CD4-positive, alpha-beta memory T cell (primary cell): ENCODE measurements at regions of chr16 and their contacts with region 1.

Region 1: GRCh38 chr16:12067714-12068401 is 91.3 kb downstream of the SNX29 start:
- DNase-seq: peak; percentile 62 to 67 (median 66)
- H3K4me3 ChIP-seq: no peak overlapping the region
- H3K4me3 Mint-ChIP-seq: no peak overlapping the region
- H3K27ac ChIP-seq: no peak overlapping the region
- H3K27ac Mint-ChIP-seq: peak overlapping the region in 3 of 7 donors; percentile 14 to 70 (median 29)
- H3K4me1 ChIP-seq: no peaks in the 10 kb centered on the region
- H3K4me1 Mint-ChIP-seq: peaks cover 4 to 6% (median 5%) of the 10 kb centered on the region in 4 donors
- H3K27me3 ChIP-seq: no peaks in the 10 kb centered on the region
- H3K27me3 Mint-ChIP-seq: no peaks in the 10 kb centered on the region

Region 2: GRCh38 chr16:11407047-11407982 is 660.5 kb before region 1 on chr16:
- CTCF ChIA-PET with region 1: interaction called, 32 read pairs
- POLR2A ChIA-PET with region 1: no interaction called
- intact Hi-C with region 1: no loop called
- DNase-seq: peak; percentile 61 to 75 (median 67)
- H3K4me3 ChIP-seq: no peak overlapping the region
- H3K4me3 Mint-ChIP-seq: peak overlapping the region in 1 of 8 donors; percentile 48
- H3K27ac ChIP-seq: no peak overlapping the region
- H3K27ac Mint-ChIP-seq: peak overlapping the region in 2 of 7 donors; percentile 80 to 84
- H3K4me1 ChIP-seq: no peaks in the 10 kb centered on the region
- H3K4me1 Mint-ChIP-seq: peaks cover 0 to 6% (median 4%) of the 10 kb centered on the region in 4 donors
- H3K27me3 ChIP-seq: no peaks in the 10 kb centered on the region
- H3K27me3 Mint-ChIP-seq: no peaks in the 10 kb centered on the region

Region 3: DNA sequence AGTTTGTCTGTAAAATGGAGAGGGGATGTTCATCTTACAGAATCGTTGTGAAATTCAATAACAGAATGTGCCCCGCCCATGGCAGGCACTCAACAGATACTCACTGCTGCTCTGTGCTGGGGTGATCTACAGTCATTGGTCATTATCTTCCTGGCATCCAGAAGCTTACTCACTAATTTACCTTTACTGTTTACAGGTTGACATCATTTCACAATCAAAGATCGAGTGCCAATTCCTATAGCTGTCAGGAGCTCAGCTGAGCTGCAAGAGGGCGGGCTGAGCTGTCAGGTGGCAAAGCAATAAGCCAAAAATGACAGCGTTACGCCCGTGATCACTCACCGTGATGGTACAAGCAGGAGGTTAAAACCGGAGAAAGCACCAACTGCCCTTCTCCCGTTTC is 532.4 kb before region 1 on chr16:
- CTCF ChIA-PET with region 1: interaction called, 12 read pairs
- POLR2A ChIA-PET with region 1: no interaction called
- intact Hi-C with region 1: loop called (anchors 10 kb)
- DNase-seq: no peak
- H3K4me3 ChIP-seq: no peak overlapping the region
- H3K4me3 Mint-ChIP-seq: no peak overlapping the region
- H3K27ac ChIP-seq: no peak overlapping the region
- H3K27ac Mint-ChIP-seq: no peak overlapping the region
- H3K4me1 ChIP-seq: no peaks in the 10 kb centered on the region
- H3K4me1 Mint-ChIP-seq: peaks cover 5 to 11% (median 10%) of the 10 kb centered on the region in 4 donors
- H3K27me3 ChIP-seq: no peaks in the 10 kb centered on the region
- H3K27me3 Mint-ChIP-seq: no peaks in the 10 kb centered on the region

Region 4: DNA sequence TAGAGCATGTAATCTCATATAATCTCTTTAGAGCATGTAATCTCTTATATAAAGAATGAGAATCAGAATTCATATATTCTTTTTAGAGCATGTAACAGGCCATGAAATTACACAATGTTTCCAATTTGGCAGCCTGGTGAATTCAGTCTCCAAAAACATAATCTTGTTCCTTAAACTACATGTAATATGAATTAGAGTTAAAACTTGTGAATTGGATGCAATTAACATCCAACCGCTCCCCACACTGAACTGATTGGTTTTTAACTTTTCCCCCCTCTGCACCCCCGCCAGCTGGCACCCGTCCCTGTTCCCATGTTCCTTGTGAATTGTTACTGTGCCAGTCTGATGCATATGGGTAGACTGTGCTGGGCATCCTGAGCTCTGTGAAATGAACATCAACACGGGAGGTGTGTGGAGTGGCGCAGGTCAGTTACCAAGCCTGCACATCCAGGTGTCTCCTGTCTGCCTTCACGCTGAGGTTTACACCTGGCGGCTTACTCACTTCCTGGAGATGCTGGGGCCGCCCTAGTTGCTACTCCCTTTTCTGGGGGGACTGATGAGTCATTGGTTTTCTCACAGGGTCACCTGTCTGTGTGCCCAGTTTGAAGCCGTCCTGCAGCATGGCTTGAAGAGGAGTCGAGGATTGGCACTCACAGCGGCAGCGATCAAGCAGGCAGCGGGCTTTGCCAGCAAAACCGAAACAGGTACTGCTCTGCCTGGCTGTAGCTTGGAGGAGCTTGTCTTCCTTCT is 40.9 kb before region 1 on chr16:
- CTCF ChIA-PET with region 1: no interaction called
- POLR2A ChIA-PET with region 1: no interaction called
- intact Hi-C with region 1: no loop called
- DNase-seq: no peak
- H3K4me3 ChIP-seq: no peak overlapping the region
- H3K4me3 Mint-ChIP-seq: no peak overlapping the region
- H3K27ac ChIP-seq: no peak overlapping the region
- H3K27ac Mint-ChIP-seq: peak overlapping the region in 3 of 7 donors; percentile 19 to 66 (median 37)
- H3K4me1 ChIP-seq: no peaks in the 10 kb centered on the region
- H3K4me1 Mint-ChIP-seq: peaks cover 0 to 6% (median 3%) of the 10 kb centered on the region in 4 donors
- H3K27me3 ChIP-seq: no peaks in the 10 kb centered on the region
- H3K27me3 Mint-ChIP-seq: no peaks in the 10 kb centered on the region

Region 5: GRCh38 chr16:12057266-12057665 is 10.6 kb before region 1 on chr16:
- CTCF ChIA-PET with region 1: interaction called, 10 read pairs
- POLR2A ChIA-PET with region 1: no interaction called
- intact Hi-C with region 1: no loop called
- DNase-seq: no peak
- H3K4me3 ChIP-seq: no peak overlapping the region
- H3K4me3 Mint-ChIP-seq: no peak overlapping the region
- H3K27ac ChIP-seq: no peak overlapping the region
- H3K27ac Mint-ChIP-seq: no peak overlapping the region
- H3K4me1 ChIP-seq: no peaks in the 10 kb centered on the region
- H3K4me1 Mint-ChIP-seq: peaks cover 3 to 9% (median 6%) of the 10 kb centered on the region in 4 donors
- H3K27me3 ChIP-seq: no peaks in the 10 kb centered on the region
- H3K27me3 Mint-ChIP-seq: no peaks in the 10 kb centered on the region

Region 6: DNA sequence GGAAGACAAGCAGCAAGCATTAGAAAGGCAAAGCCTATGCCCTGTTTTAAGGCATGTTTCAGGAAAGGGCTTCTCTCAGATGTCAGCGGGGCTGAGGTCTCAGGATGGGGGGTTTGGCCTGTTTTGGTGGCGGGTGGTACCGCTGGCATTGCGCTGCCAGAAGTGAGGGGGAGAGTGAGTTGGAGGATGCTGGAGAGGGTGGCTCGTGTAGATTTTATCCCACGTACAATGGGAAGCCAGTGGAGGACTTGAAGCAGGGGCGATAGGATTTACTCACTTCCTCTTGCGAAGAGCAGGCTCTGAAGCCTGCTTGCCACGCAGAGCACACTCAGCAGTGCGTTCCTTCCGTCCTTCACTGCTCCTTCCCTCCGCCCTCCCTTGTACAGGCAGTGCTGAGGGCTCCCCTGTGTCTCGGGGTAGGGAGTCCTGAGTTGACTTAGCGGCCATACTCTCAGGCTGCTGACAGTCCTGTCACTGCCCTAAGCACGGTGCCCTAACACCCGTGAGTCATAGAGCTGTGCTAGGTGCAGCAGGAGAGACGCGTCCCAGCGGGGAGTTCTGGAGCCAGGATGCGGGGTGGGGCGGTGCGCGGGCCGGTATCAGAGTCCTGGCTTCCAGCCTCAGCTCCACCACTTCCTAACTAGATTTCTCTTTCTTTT is 21.8 kb after region 1 on chr16:
- CTCF ChIA-PET with region 1: interaction called, 54 read pairs
- POLR2A ChIA-PET with region 1: interaction called, 8 read pairs
- intact Hi-C with region 1: no loop called
- DNase-seq: peak in 3 of 5 donors; percentile 25 to 38 (median 38)
- H3K4me3 ChIP-seq: peak overlapping the region; percentile 29 to 32
- H3K4me3 Mint-ChIP-seq: peak overlapping the region; percentile 74 to 89 (median 80)
- H3K27ac ChIP-seq: peak overlapping the region; percentile 0
- H3K27ac Mint-ChIP-seq: peak overlapping the region; percentile 60 to 98 (median 92)
- H3K4me1 ChIP-seq: peaks cover 24% of the 10 kb centered on the region
- H3K4me1 Mint-ChIP-seq: peaks cover 20 to 34% (median 26%) of the 10 kb centered on the region in 4 donors
- H3K27me3 ChIP-seq: no peaks in the 10 kb centered on the region
- H3K27me3 Mint-ChIP-seq: no peaks in the 10 kb centered on the region

Region 7: GRCh38 chr16:12120217-12120981 is 52.5 kb after region 1 on chr16:
- CTCF ChIA-PET with region 1: no interaction called
- POLR2A ChIA-PET with region 1: no interaction called
- intact Hi-C with region 1: no loop called
- DNase-seq: no peak
- H3K4me3 ChIP-seq: no peak overlapping the region
- H3K4me3 Mint-ChIP-seq: no peak overlapping the region
- H3K27ac ChIP-seq: no peak overlapping the region
- H3K27ac Mint-ChIP-seq: peak overlapping the region in 1 of 7 donors; percentile 44
- H3K4me1 ChIP-seq: no peaks in the 10 kb centered on the region
- H3K4me1 Mint-ChIP-seq: peaks cover 0 to 12% (median 8%) of the 10 kb centered on the region in 4 donors
- H3K27me3 ChIP-seq: no peaks in the 10 kb centered on the region
- H3K27me3 Mint-ChIP-seq: no peaks in the 10 kb centered on the region